B cell (primary cell): ENCODE measurements at regions of chr15 and their contacts with region 1.

Region 1: DNA sequence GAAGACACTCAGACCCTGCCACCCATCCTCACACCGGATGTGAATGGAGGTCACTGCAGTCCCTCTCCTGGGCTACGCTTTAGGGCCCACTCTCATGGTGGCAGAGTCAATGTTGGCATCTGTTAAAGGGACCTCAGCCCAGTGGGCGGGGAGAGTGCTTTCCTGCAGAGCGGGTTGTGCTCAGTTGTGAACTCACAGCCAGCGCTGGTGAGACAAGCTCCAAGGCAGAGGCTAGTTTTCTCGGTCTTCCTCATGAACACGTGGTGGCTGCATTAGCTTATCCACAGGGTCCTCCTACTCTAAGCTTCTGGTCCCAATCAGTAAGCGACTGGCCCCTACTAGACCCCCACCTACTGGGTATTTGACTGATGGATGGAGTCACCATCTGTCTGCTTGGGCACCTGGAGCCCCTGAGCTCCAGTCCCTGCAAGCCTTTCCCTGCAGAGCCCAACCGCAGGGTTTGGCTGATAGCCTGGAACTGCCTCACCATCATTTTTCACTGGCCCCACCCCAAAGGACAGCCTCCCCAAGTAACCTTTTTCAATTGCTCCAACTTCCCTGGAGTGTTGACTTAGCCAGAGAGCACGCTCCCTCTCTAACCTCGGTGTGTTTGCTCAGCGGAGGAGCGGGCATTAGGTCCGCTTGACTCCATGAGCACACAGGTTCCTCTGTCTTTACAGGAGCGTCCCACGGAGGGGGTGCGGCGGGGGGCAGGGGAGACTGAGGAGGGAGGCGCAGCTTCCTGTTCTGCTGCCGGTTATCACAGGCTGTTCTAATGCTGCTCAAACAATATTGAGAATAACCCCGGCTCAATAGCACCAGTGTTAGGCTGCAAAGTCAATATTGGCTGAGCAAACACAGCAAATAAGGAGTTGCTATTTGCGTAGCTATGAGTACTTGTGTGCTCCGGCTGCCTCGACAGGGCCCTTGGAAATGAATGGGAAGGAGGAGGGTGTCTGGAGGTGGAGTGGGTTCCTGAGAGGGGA is 141.7 kb downstream of the RPLP1 start:
- DNase-seq: no peak
- ATAC-seq: no peak
- H3K4me3 ChIP-seq: no peak overlapping the region
- H3K4me3 Mint-ChIP-seq: no peak overlapping the region
- H3K27ac ChIP-seq: no peak overlapping the region
- H3K27ac Mint-ChIP-seq: no peak overlapping the region
- H3K4me1 ChIP-seq: peaks cover 7 to 8% of the 10 kb centered on the region in 2 donors
- H3K4me1 Mint-ChIP-seq: peaks cover 3% of the 10 kb centered on the region
- H3K27me3 ChIP-seq: peaks cover 0 to 30% (median 15%) of the 10 kb centered on the region in 4 experiments
- H3K27me3 Mint-ChIP-seq: peaks cover 59% of the 10 kb centered on the region
- CTCF ChIP-seq: no peak

Region 2: DNA sequence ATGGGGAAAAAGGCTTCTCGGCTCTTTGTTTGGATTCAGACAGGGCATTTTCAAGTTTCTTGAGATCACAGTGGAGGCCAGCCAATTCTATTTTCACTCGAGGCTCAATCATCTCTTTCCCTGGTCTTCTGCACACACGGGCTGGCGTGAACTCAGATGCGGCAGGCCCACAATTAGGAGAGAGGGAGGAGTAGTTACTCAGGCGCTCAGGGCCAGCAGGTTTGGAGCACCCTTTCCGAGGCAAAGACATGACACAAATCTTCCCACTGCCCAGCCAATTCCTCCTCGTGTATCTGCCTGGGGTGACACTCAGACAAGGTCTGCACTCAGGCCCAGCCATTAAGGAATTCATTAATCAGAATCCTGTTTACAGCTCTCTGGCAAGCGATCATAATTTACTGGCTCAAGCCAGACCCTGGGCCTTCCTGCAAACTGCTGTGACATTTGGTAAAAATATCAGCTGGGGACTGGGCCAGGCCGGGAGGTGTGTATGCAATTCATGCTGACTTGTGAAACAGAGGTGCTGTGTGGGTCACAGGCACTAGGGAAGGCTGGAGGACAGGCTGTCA is 571.5 kb after region 1 on chr15:
- CTCF ChIA-PET with region 1: no interaction called
- POLR2A ChIA-PET with region 1: no interaction called
- intact Hi-C with region 1: no loop called
- DNase-seq: no peak
- ATAC-seq: no peak
- H3K4me3 ChIP-seq: no peak overlapping the region
- H3K4me3 Mint-ChIP-seq: no peak overlapping the region
- H3K27ac ChIP-seq: no peak overlapping the region
- H3K27ac Mint-ChIP-seq: no peak overlapping the region
- H3K4me1 ChIP-seq: no peaks in the 10 kb centered on the region
- H3K4me1 Mint-ChIP-seq: no peaks in the 10 kb centered on the region
- H3K27me3 ChIP-seq: peaks cover 0 to 4% (median 0%) of the 10 kb centered on the region in 4 experiments
- H3K27me3 Mint-ChIP-seq: peaks cover 6% of the 10 kb centered on the region
- CTCF ChIP-seq: no peak

Region 3: DNA sequence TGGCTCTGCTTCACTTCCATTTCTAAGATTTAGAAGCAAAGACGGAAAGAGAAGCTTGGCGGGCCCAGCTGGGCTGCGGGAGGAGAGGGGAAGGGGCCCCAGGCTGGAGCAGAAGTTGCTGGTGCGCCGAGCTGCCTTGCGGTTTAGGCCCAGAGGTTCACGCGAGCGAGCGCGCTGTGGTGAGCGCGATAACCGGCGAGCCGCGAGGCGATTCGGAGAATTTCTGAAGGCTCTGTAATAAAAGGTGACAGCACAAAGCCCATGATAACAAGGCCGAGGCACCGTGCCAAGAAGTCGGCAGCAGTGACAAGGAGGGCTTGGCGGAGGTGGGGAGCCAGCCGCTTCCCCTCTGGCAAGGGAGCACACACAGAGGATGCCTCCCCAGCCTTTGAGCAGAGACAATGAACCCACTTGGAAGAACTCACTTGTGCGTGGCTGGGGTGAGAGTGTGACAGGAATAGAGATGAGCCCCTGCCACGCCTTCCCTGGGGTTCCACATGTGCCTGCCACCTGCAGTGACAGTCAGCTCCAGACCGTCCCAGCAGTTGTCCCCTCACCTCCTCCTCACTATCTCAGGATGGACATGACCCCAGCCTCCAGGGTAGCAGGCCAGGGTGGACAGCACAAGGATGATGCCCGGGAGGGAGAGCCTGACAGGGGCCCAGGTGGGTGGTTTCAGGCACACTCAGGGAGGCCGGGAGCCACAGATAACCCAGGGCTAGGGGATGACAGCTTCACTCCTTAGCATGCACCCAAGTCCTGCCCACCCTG is 853.8 kb after region 1 on chr15:
- CTCF ChIA-PET with region 1: no interaction called
- POLR2A ChIA-PET with region 1: interaction called, 10 read pairs
- intact Hi-C with region 1: no loop called
- DNase-seq: peak; percentile 70
- ATAC-seq: peak; percentile 73
- H3K4me3 ChIP-seq: peak overlapping the region in 2 of 5 experiments; percentile 17 to 24
- H3K4me3 Mint-ChIP-seq: peak overlapping the region; percentile 62
- H3K27ac ChIP-seq: no peak overlapping the region
- H3K27ac Mint-ChIP-seq: peak overlapping the region; percentile 37
- H3K4me1 ChIP-seq: peaks cover 21 to 30% of the 10 kb centered on the region in 2 donors
- H3K4me1 Mint-ChIP-seq: peaks cover 29% of the 10 kb centered on the region
- H3K27me3 ChIP-seq: peaks cover 0 to 12% (median under 1%) of the 10 kb centered on the region in 4 experiments
- H3K27me3 Mint-ChIP-seq: peaks cover 27% of the 10 kb centered on the region
- CTCF ChIP-seq: no peak